Breast epithelium (tissue), 4 donors: ENCODE measurements at regions of chr20 and their contacts with region 1.

Region 1: GRCh38 chr20:3190681-3191111 is 13.8 kb downstream of the DDRGK1 start:
- DNase-seq: no peak
- H3K4me3 ChIP-seq: no peak overlapping the region
- H3K27ac ChIP-seq: no peak overlapping the region
- H3K4me1 ChIP-seq: no peaks in the 10 kb centered on the region
- H3K27me3 ChIP-seq: no peaks in the 10 kb centered on the region
- CTCF ChIP-seq: no peak
- POLR2A ChIP-seq: no peak

Region 2: DNA sequence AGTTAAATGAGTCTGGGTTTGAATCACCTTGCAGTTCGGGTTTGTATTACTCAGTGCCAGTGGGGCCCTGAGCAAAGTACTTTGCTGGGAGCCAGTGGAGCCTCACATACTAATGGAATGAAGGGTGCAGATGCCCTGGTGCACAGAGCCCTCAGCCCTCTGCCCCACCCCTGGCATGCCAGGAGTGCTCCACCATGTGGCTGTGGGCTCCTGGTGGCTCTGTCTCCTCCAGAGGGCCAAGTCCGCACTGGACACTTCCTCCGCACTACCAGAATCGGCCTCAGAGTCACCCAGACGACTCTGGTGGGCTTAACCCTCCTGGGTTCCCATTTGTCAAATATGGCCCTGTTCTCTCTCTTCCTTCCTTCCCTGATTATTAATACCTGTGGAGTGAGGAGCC is 995.1 kb before region 1 on chr20:
- intact Hi-C with region 1: loop called (anchors 10 kb)
- DNase-seq: no peak
- H3K4me3 ChIP-seq: no peak overlapping the region
- H3K27ac ChIP-seq: no peak overlapping the region
- H3K4me1 ChIP-seq: no peaks in the 10 kb centered on the region
- H3K27me3 ChIP-seq: no peaks in the 10 kb centered on the region
- CTCF ChIP-seq: no peak
- POLR2A ChIP-seq: no peak

Region 3: GRCh38 chr20:3059489-3059888 is 131.2 kb before region 1 on chr20:
- intact Hi-C with region 1: loop called (anchors 5 kb)
- DNase-seq: no peak
- H3K4me3 ChIP-seq: no peak overlapping the region
- H3K27ac ChIP-seq: no peak overlapping the region
- H3K4me1 ChIP-seq: no peaks in the 10 kb centered on the region
- H3K27me3 ChIP-seq: no peaks in the 10 kb centered on the region
- CTCF ChIP-seq: no peak
- POLR2A ChIP-seq: no peak